Heart left ventricle (tissue), 16 donors: ENCODE measurements at regions of chr1 and their contacts with region 1.

Region 1: GRCh38 chr1:206469933-206470691 is at the start of gene IKBKE:
- DNase-seq: peak in 3 of 5 donors; percentile 38 to 63 (median 48)
- ATAC-seq: peak; percentile 48 to 81 (median 77)
- H3K4me3 ChIP-seq: peak within 1 kb of the TSS in 11 of 12 donors; percentile 26 to 69 (median 57)
- H3K27ac ChIP-seq: peak within 1 kb of the TSS in 3 of 12 donors; percentile 31 to 86 (median 34)
- H3K4me1 ChIP-seq: peaks cover 4 to 80% (median 18%) of the 10 kb centered on the region in 12 donors
- H3K27me3 ChIP-seq: peaks cover 0 to 6% (median 0%) of the 10 kb centered on the region in 9 donors
- CTCF ChIP-seq: peak in 4 of 12 donors; percentile 14 to 27 (median 19)
- POLR2A ChIP-seq: no peak
- total RNA-seq, gene IKBKE: 0.62 to 10.8 (median 1.1) TPM

Region 2: GRCh38 chr1:205416322-205416721 is 1053.8 kb before region 1 on chr1:
- intact Hi-C with region 1: no loop called
- DNase-seq: peak in 1 of 5 donors; percentile 37
- ATAC-seq: peak; percentile 26 to 71 (median 58)
- H3K4me3 ChIP-seq: no peak overlapping the region
- H3K27ac ChIP-seq: peak overlapping the region in 3 of 12 donors; percentile 20 to 47 (median 24)
- H3K4me1 ChIP-seq: peaks cover 0 to 19% (median 2%) of the 10 kb centered on the region in 12 donors
- H3K27me3 ChIP-seq: no peaks in the 10 kb centered on the region
- CTCF ChIP-seq: no peak
- POLR2A ChIP-seq: no peak

Region 3: GRCh38 chr1:206663832-206664652 is 193.9 kb after region 1 on chr1:
- intact Hi-C with region 1: loop called in 1 of 10 experiments (anchors 10 kb)
- DNase-seq: peak; percentile 75 to 86 (median 76)
- ATAC-seq: peak; percentile 71 to 80 (median 76)
- H3K4me3 ChIP-seq: peak overlapping the region in 10 of 12 donors; percentile 1 to 46 (median 30)
- H3K27ac ChIP-seq: peak overlapping the region; percentile 78 to 96 (median 88)
- H3K4me1 ChIP-seq: peaks cover 0 to 62% (median 27%) of the 10 kb centered on the region in 12 donors
- H3K27me3 ChIP-seq: peaks cover 0 to 10% (median 0%) of the 10 kb centered on the region in 9 donors
- CTCF ChIP-seq: peak; percentile 67 to 90 (median 84)
- POLR2A ChIP-seq: peak in 1 of 2 donors; percentile 59

Region 4: DNA sequence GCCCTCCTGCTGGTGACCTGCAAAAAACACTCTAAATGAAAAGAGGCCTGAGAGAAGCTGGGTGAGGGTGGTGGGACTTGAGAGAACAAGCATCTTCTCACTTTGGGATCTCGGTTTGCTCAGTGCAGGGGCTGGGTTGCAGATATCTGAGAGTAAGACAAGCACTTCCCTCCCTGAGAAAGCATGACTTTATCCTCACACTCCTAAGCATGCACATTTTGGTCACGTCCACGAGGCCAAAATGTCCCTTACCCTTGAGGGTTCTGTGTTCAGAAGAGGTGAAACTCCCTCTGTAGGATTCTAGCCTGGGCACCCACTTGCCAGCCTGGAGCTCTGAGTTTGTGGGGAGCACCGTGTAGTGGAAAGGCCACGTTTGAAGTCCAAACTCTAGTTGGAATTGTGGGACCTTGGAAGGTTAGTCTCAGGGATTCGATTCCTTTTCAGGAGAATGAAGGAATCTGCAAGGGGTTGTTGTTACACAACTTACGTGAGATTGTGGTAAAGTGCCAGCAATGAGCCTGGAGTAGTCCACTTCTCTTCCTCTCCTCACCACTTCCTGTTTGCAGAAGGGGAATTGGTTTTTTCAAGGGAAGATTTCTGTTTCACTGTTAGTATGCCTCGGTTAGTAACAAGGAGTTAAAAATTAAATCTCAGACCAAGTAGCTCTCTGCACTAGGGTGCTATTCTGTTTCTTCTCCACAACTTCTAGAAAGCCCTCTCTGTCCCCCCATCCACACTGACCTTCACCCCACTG is 497.2 kb after region 1 on chr1:
- intact Hi-C with region 1: no loop called
- DNase-seq: no peak
- ATAC-seq: peak in 2 of 4 donors; percentile 37 to 44
- H3K4me3 ChIP-seq: no peak overlapping the region
- H3K27ac ChIP-seq: peak overlapping the region in 1 of 12 donors; percentile 15
- H3K4me1 ChIP-seq: peaks cover 0 to 55% (median 0%) of the 10 kb centered on the region in 12 donors
- H3K27me3 ChIP-seq: peaks cover 0 to 24% (median 0%) of the 10 kb centered on the region in 9 donors
- CTCF ChIP-seq: no peak
- POLR2A ChIP-seq: no peak